CD8-positive, alpha-beta T cell (primary cell): ENCODE measurements at regions of chr20 and their contacts with region 1.

Region 1: DNA sequence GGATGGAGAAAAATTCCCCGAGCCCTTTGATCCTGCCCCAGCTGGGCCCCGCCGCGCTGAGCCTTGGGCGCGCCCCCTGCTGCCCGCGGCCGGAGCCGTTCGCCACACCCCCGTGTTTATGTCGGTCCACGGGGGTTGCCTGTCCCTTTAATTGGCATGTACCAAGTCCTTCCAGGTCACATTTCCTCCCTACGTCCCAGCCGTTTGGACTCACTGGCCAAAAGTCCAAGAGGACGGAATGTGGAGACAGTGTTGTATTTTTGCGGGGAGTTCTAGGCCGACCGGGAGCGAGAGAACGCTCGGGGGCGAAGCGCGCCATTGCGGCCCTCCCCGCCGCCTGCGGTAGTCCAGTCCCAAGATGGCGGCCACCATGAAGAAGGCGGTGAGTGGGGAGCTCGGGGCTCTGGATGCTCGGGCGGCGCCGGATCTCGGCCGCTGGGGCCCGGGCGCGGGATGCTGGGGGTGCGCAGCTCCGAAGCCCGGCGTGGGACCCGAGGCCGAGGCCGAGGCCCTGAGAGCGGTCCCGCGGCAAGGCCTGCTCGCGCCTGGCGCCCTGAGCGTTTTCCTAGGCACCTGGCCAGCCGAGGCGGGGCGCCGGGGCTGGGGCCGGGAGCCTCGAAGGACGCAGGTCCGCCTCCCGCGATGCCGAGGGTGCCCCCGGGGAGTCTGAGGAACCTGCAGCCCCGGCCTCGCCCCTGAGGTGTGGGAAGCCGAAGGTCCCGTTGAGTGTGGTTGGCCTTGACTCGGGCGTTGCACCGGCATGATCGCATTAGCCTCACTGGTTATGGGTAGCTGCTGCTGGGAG is at the start of gene PFDN4:
- DNase-seq: peak; percentile 52 to 89 (median 73)
- ATAC-seq: peak; percentile 91
- H3K4me3 ChIP-seq: peak within 1 kb of the TSS; percentile 67 to 97
- H3K4me3 Mint-ChIP-seq: peak within 1 kb of the TSS; percentile 98
- H3K27ac ChIP-seq: peak within 1 kb of the TSS; percentile 99 to 100
- H3K27ac Mint-ChIP-seq: peak within 1 kb of the TSS; percentile 100
- H3K4me1 ChIP-seq: peaks cover 13% of the 10 kb centered on the region
- H3K4me1 Mint-ChIP-seq: peaks cover 37% of the 10 kb centered on the region
- H3K27me3 ChIP-seq: no peaks in the 10 kb centered on the region
- H3K27me3 Mint-ChIP-seq: no peaks in the 10 kb centered on the region
- CTCF ChIP-seq: no peak
- total RNA-seq, gene PFDN4: 19.2 to 20.2 TPM

Region 2: DNA sequence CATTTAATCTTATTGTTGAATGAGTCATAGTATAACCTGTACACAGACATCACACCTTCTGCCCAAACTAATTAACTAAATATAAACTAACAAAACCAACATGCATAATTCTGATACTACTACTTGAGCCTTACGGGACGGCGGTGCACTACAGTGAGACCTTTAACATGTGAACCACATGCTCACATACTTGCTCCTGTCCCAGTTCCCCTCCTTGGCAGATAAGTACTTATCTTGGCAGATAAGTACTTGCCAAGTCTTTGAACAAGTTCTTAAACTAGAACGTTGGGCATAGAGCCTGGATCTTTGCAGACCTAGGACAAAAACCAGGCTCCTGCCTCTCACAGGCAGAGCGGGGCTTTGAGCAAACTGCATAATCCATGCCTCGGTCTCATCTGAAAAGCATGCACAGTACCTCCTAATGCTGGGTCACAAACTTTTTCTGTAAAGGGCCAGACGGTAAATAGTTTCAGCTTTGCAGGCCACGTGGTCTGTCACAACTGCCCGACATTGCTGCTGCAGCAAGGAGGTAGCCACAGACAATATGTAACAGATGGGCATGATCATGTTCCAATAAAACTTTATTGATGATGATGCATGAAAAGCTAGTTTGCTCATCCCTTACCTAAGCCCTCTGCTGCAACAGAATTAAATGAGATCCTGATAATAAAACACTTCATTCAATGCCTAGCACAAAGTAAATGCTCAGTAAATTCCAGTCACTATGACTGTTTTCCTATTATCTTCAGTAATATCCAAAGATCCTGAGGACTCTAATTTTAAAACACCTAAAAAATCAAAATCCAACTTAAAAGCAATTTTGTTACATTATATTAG is 637.2 kb before region 1 on chr20:
- CTCF ChIA-PET with region 1: no interaction called
- POLR2A ChIA-PET with region 1: no interaction called
- intact Hi-C with region 1: loop called (anchors 2 to 10 kb)
- DNase-seq: peak in 1 of 9 experiments; percentile 23
- ATAC-seq: no peak
- H3K4me3 ChIP-seq: no peak overlapping the region
- H3K4me3 Mint-ChIP-seq: no peak overlapping the region
- H3K27ac ChIP-seq: no peak overlapping the region
- H3K27ac Mint-ChIP-seq: peak overlapping the region; percentile 52
- H3K4me1 ChIP-seq: peaks cover 44% of the 10 kb centered on the region
- H3K4me1 Mint-ChIP-seq: peaks cover 76% of the 10 kb centered on the region
- H3K27me3 ChIP-seq: no peaks in the 10 kb centered on the region
- H3K27me3 Mint-ChIP-seq: no peaks in the 10 kb centered on the region
- CTCF ChIP-seq: no peak